Activated CD8-positive, alpha-beta memory T cell treated with anti-CD3 and anti-CD28 coated beads, Interleukin-2, amount 10 ng/mL, durations not matched to agents 7 days and 5 days (primary cell): ENCODE measurements at regions of chr1 and their contacts with region 1.

Region 1: DNA sequence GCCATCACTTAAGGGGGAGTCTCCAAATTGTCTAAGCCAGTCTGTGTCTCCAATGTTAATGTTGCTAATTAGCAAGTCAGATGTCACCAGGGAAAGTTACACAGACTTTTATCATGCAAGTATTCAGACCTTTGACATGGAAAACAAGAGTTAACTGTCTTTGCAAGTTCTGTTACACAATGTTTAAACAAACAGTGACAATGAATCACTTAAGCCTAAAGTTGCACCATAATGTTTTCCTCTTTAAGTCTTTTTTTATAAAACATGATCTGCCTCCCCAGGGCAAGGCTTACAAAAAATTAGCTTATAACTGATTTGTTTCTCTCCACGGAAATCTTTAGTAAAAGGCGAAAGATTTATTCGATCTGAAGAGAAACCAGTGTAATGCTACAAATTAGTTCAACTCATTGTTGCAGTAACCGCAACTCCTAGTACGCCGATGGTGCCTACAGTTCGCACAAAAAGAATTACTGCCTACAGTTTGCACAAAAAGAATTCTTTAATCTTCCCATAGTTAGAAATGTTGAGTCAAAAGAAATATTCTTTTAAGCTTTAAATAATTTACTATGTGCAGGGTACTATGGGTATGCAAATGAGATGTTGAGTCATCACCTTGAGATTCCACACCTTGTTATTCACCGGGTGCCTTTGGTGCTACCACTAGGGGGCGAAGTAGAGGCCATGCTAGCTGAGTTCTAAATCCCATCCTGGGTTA is 45.3 kb downstream of the HHAT start:
- DNase-seq: peak; percentile 85
- ATAC-seq: peak; percentile 79
- H3K4me3 Mint-ChIP-seq: no peak overlapping the region
- H3K27ac Mint-ChIP-seq: peak overlapping the region; percentile 80
- H3K4me1 Mint-ChIP-seq: peaks cover 17% of the 10 kb centered on the region
- H3K27me3 Mint-ChIP-seq: peaks cover 6% of the 10 kb centered on the region

Region 2: DNA sequence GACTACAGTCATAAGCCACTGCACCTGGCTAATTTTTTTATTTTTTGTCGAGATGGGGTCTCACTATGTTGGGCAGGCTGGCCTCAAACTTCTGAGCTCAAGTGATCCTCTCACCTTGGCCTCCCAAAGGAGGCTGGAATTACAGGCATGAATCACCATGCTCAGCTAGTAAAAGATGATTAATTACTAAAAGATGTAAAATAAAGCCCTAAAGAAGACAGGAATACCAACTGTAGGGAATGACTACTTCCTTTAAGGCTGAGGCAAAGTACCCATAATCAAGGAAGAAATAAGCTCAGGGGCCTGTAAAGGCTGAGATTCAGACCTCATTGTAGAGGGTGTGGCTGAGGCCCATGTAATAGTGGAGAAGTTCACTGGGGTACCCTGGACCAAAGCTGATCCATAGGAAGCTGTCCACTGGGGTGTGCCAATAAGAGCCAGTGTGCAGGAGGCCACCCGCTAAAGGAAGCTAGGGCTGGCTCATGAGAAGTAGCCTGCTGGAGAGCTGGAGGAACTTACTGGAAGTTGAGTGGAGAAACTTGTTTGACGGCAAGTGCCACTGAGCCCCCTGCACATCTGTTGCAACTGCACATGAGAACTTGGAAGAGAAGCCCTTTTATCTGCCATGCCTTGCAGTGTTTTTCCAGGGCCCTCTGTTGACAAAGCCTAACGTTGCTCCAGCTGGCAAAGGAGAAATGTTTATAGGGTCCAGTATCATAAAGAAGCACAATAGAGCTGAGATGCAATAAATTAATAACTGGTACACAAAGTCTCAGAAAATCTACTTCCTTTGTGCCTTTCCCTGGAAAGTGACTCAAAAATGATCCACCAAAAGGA is 159.3 kb before region 1 on chr1:
- CTCF ChIA-PET with region 1: no interaction called
- DNase-seq: no peak
- ATAC-seq: no peak
- H3K4me3 Mint-ChIP-seq: no peak overlapping the region
- H3K27ac Mint-ChIP-seq: no peak overlapping the region
- H3K4me1 Mint-ChIP-seq: no peaks in the 10 kb centered on the region
- H3K27me3 Mint-ChIP-seq: peaks cover 14% of the 10 kb centered on the region

Region 3: GRCh38 chr1:210332719-210333398 is 41.2 kb before region 1 on chr1:
- CTCF ChIA-PET with region 1: interaction called, 14 read pairs
- DNase-seq: peak; percentile 92
- ATAC-seq: peak; percentile 69
- H3K4me3 Mint-ChIP-seq: peak overlapping the region; percentile 45
- H3K27ac Mint-ChIP-seq: peak overlapping the region; percentile 78
- H3K4me1 Mint-ChIP-seq: peaks cover 39% of the 10 kb centered on the region
- H3K27me3 Mint-ChIP-seq: peaks cover 50% of the 10 kb centered on the region

Region 4: GRCh38 chr1:210384630-210385029 is 10.6 kb after region 1 on chr1:
- CTCF ChIA-PET with region 1: interaction called, 22 read pairs
- DNase-seq: no peak
- ATAC-seq: no peak
- H3K4me3 Mint-ChIP-seq: no peak overlapping the region
- H3K27ac Mint-ChIP-seq: no peak overlapping the region
- H3K4me1 Mint-ChIP-seq: no peaks in the 10 kb centered on the region
- H3K27me3 Mint-ChIP-seq: no peaks in the 10 kb centered on the region

Region 5: DNA sequence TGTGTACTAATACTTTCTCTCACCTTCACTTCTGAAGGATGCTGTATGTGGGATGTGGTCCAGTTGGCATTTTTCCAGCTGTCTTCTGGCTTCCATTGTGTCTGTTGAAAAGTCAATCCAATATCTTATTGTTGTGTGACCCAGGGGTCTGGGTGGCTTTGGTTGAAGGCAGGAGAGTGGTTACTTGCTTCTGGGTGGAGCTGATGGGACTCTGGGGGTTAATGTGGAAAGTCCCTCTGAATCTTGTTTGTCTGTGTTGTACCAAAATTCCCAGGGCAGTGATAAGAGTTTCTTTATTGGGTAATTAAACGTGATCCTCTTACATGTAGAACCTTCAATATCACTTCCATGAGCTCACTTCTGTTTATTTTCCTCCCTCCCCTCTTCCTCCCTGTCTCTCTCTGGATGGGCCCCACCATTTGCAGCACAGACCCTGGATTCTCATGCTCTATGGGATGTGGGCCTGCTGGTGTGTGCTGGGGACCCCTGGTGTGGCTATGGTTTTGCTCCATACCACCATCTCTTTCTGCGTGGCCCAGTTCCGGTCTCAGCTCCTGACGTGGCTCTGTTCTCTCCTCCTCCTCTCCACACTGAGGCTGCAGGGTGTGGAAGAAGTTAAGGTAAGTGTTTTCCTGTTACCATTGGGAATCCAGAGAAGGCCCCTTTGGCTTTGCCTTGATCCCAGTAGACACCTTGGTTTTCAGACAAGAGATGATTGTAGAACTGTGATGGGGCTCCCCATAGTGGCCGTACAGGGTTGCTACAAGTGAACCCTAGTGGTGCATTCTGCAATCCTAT is 26.2 kb after region 1 on chr1:
- CTCF ChIA-PET with region 1: interaction called, 27 read pairs
- DNase-seq: peak; percentile 64
- ATAC-seq: peak; percentile 91
- H3K4me3 Mint-ChIP-seq: no peak overlapping the region
- H3K27ac Mint-ChIP-seq: no peak overlapping the region
- H3K4me1 Mint-ChIP-seq: peaks cover 17% of the 10 kb centered on the region
- H3K27me3 Mint-ChIP-seq: peaks cover 12% of the 10 kb centered on the region

Region 6: DNA sequence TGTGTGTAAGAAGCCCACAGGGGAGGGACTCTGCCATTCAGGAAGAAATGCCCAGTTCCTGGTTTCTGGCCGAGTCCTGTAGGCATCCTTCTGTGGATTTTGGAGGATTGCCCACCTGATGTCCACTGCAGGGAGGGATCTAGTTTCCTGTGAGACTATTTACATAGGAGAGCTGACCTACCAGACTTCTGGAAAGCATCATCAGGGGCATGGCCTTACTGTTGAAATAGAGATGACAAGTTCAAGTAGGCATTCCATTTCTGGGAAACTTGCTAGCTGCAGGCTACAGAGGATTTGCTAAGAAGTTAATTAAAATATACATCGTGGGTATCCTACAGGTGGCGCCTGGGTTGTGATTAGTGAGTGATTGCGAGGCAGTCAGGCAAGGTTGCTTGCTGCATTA is 103.3 kb after region 1 on chr1:
- CTCF ChIA-PET with region 1: no interaction called
- DNase-seq: no peak
- ATAC-seq: no peak
- H3K4me3 Mint-ChIP-seq: no peak overlapping the region
- H3K27ac Mint-ChIP-seq: no peak overlapping the region
- H3K4me1 Mint-ChIP-seq: peaks cover 7% of the 10 kb centered on the region
- H3K27me3 Mint-ChIP-seq: no peaks in the 10 kb centered on the region